ENCODE measurements at regions of chr9 and their contacts with region 1.

Region 1: DNA sequence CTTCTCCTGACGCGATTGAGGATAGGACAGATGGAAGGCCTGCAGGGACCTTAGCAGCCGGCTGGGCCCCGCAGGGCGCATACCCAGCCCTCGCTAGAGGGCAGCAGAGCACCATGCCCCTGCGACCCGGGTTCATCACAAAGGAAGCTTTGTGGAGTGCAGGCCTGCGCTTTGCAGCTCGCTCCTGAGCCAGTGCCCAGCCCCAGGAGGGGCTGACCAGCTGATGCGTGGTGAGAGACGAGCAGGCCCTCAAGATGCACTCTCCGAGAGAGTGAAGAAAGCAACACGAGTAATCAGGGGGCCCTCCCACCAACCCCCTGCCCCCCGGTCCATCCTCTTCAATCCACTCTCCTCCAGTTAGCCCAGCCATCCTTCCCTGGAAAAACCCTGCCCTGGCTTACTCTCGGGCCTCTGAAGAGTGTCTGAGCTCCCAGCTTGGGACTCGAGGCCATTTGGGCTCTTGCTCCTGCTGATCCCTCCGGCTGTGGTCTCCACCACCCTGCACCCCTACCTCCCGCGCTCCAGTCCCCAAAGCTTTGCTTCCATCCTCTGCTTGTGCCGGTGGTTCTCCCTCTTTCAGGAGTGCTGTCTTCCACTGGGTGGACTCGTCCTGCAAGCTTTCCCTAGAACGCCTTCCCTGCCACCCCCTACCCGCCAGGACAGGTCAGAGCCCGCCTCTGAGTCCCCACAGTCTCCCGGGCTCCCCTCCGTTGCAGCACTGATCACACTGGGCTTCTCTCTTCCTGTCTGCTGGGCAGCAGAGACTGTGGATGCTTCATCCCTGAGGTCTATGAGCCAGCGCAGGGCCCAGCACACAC is 9.1 kb upstream of the KIF12 start:
- DNase-seq: peak; percentile 90
- ATAC-seq: peak; percentile 96
- H3K4me3 Mint-ChIP-seq: no peak overlapping the region
- H3K27ac Mint-ChIP-seq: no peak overlapping the region
- H3K4me1 Mint-ChIP-seq: peaks cover 10% of the 10 kb centered on the region
- H3K27me3 Mint-ChIP-seq: peaks cover 83% of the 10 kb centered on the region
- CTCF ChIP-seq: peak; percentile 84

Region 2: GRCh38 chr9:114055061-114055460 is 53.2 kb before region 1 on chr9:
- CTCF ChIA-PET with region 1: no interaction called
- POLR2A ChIA-PET with region 1: no interaction called
- DNase-seq: no peak
- ATAC-seq: peak; percentile 30
- H3K4me3 Mint-ChIP-seq: no peak overlapping the region
- H3K27ac Mint-ChIP-seq: no peak overlapping the region
- H3K4me1 Mint-ChIP-seq: 0 out of 2 replicates have a peak, but pooled peaks cover 3% of the 10 kb centered on the region
- H3K27me3 Mint-ChIP-seq: no peaks in the 10 kb centered on the region
- CTCF ChIP-seq: no peak

Region 3: GRCh38 chr9:114082017-114082762 is 26.0 kb before region 1 on chr9:
- CTCF ChIA-PET with region 1: interaction called, 80 read pairs
- POLR2A ChIA-PET with region 1: no interaction called
- DNase-seq: peak; percentile 92
- ATAC-seq: peak; percentile 91
- H3K4me3 Mint-ChIP-seq: no peak overlapping the region
- H3K27ac Mint-ChIP-seq: no peak overlapping the region
- H3K4me1 Mint-ChIP-seq: no peaks in the 10 kb centered on the region
- H3K27me3 Mint-ChIP-seq: peaks cover 35% of the 10 kb centered on the region
- CTCF ChIP-seq: peak; percentile 92

Region 4: DNA sequence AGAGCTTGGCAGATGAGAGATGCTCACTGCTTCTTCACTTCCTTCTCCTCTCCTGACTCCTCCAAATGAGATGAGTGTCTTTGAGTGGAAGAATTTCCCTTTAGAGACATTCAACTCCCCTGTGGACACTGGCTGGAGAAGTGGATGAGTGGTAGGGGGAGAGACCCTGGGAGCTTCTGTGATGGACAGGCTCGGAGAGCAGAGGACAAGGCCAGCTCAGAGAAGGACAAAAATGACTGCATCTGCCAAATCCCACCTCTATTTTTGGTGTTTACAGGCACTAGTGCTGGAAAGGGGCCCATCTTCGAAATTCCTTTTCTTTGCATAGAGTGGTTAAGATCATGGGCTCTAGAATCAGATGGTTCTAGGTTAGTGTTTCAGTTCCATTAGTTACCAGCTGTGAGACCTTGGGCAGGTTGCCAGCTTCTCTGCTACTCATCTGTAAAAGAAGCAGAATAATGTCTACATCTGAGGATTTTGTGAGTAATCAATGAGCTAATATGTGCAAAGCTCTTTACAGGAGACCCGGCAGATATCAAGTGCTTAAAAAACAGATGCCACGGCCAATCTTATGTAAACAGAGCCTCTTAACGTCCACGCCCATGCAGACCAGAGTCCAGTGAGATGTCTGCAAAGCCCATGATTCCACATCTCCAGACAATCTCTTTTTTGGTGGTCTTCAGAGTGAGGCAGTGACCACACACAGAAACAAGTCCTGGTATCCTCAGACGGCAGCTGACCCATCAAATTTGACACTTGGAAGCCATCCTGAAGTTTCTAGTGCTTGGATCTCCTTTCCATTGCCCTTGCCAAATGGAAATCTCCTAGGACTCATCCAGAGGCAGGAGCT is 33.6 kb after region 1 on chr9:
- CTCF ChIA-PET with region 1: interaction called, 23 read pairs
- POLR2A ChIA-PET with region 1: no interaction called
- DNase-seq: no peak
- ATAC-seq: no peak
- H3K4me3 Mint-ChIP-seq: no peak overlapping the region
- H3K27ac Mint-ChIP-seq: no peak overlapping the region
- H3K4me1 Mint-ChIP-seq: no peaks in the 10 kb centered on the region
- H3K27me3 Mint-ChIP-seq: peaks cover 65% of the 10 kb centered on the region
- CTCF ChIP-seq: no peak

Region 5: GRCh38 chr9:114186605-114187289 is 78.5 kb after region 1 on chr9:
- CTCF ChIA-PET with region 1: interaction called, 18 read pairs
- POLR2A ChIA-PET with region 1: no interaction called
- DNase-seq: no peak
- ATAC-seq: no peak
- H3K4me3 Mint-ChIP-seq: no peak overlapping the region
- H3K27ac Mint-ChIP-seq: no peak overlapping the region
- H3K4me1 Mint-ChIP-seq: no peaks in the 10 kb centered on the region
- H3K27me3 Mint-ChIP-seq: no peaks in the 10 kb centered on the region; the same call in 1 of the 2 replicates
- CTCF ChIP-seq: no peak

Region 6: DNA sequence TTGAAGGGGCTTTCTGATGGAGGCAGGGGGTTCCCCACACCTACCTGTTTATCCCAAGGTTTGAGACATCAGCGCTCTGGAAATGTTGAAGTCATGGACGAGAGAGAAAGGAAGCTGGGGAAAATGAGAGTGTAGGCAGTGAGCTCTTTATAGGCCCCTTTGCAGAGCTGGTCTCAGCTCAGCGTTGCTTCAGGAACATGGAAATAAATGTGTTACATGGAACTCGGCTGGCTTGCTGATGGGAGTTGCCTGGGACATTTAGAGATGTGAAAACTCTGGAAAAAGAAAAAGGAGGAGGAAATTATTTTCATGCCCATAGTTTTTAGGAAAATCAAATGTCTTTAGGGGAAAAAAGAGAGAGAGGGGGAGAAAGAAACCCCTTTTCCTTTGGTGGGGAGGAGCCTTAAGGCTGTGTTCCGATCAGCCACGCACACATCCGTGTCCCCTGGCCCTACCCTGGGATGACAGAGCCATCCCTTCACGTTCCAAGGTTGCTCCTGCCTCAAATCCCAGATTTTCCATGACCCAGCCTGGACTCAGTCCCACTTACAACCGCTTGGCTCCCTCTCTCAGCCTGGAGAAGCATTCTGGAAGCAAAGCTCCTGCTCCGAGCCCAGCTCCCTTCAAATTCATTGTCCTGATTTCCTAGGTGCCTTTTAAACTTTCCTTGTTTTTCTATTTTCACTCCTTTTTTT is 125.4 kb after region 1 on chr9:
- CTCF ChIA-PET with region 1: interaction called, 23 read pairs
- POLR2A ChIA-PET with region 1: no interaction called
- DNase-seq: no peak
- ATAC-seq: no peak
- H3K4me3 Mint-ChIP-seq: no peak overlapping the region
- H3K27ac Mint-ChIP-seq: 0 out of 2 replicates have a peak overlapping the region, but pooled peaks have one; percentile 33
- H3K4me1 Mint-ChIP-seq: 0 out of 2 replicates have a peak, but pooled peaks cover 3% of the 10 kb centered on the region
- H3K27me3 Mint-ChIP-seq: no peaks in the 10 kb centered on the region
- CTCF ChIP-seq: no peak

Region 7: GRCh38 chr9:114271641-114272081 is 163.4 kb after region 1 on chr9:
- CTCF ChIA-PET with region 1: interaction called, 114 read pairs
- POLR2A ChIA-PET with region 1: interaction called, 3 read pairs
- DNase-seq: peak; percentile 58
- ATAC-seq: peak; percentile 73
- H3K4me3 Mint-ChIP-seq: no peak overlapping the region
- H3K27ac Mint-ChIP-seq: no peak overlapping the region
- H3K4me1 Mint-ChIP-seq: no peaks in the 10 kb centered on the region
- H3K27me3 Mint-ChIP-seq: no peaks in the 10 kb centered on the region
- CTCF ChIP-seq: no peak